HEK293T (cell line): ENCODE measurements at regions of chr17 and their contacts with region 1.

Region 1: DNA sequence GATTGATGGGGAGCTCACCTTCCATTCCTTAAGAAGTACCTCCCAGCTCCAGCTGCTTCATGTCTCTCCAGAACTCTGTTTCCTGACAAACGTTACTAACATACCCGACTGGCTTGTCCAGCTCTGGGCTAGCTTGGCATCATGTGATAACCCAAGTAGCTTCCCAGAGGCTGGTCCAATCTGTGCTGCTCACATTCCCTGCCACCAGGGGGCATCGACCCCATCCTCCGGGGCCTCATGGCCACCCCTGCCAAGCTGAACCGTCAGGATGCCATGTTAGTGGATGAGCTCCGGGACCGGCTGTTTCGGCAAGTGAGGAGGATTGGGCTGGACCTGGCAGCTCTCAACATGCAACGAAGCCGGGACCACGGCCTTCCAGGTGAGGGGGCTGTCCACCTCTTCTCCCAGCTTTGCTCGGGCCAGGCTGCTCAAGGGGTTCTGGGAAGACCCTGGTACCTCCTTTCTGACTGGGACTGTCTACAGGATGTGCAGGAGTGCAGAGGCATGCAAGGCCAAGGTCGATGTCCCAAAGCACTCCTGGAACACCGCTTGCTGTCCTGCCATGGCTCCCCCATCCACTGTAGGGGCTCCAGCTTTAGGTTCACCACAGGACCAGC is 7.6 kb downstream of the EPX start:
- DNase-seq: peak; percentile 74

Region 2: DNA sequence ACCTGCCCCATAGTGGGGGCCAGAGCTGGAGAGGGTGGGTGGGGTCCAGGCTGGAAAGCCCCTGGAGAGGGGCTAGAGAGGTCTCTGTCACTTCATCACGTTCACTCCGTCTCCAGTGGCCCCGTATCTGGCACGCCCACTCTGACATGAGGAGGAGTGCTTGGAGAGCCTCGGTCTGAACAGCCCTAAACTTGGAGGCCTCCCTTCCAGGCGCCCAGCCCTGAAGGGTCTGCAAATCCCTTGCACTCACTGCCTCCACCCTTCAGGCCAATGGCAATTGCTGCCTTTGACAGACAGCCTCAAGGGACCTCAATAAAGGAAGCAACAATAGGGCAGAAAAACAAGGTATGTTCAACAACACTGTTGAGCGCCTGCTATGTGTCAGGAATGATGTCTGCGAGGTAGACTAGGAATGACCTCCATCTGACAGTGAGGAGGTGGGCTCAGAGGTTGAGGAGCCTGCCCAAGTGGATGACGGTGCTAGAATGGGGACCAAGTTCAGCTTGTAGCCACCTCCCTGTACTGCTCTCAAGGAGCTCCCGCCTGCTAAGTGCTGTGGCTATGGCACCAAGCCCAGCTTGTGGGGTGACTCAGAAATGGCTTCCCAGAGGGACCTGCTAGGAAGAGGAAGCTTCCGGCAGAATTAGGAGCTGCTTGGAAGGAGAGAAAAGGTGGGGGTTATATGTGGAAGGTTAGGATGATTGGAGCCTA is 10.5 kb before region 1 on chr17:
- CTCF ChIA-PET with region 1: interaction called, 15 read pairs
- POLR2A ChIA-PET with region 1: interaction called, 3 read pairs
- DNase-seq: no peak

Region 3: GRCh38 chr17:58219001-58219788 is 19.1 kb after region 1 on chr17 and contains the start of gene MKS1:
- CTCF ChIA-PET with region 1: interaction called, 8 read pairs
- POLR2A ChIA-PET with region 1: interaction called, 13 read pairs
- DNase-seq: peak; percentile 100